ENCODE measurements at regions of chr3 and their contacts with region 1.

Region 1: GRCh38 chr3:124700880-124701684 is 29.2 kb upstream of the UMPS start:
- DNase-seq: no peak
- ATAC-seq: no peak
- H3K4me3 ChIP-seq: no peak overlapping the region
- H3K4me3 Mint-ChIP-seq: no peak overlapping the region
- H3K27ac ChIP-seq: no peak overlapping the region
- H3K27ac Mint-ChIP-seq: no peak overlapping the region
- H3K4me1 ChIP-seq: no peaks in the 10 kb centered on the region
- H3K4me1 Mint-ChIP-seq: no peaks in the 10 kb centered on the region
- H3K27me3 ChIP-seq: peaks cover 0 to 16% of the 10 kb centered on the region in 2 experiments
- H3K27me3 Mint-ChIP-seq: peaks cover 17 to 23% of the 10 kb centered on the region in 2 donors

Region 2: GRCh38 chr3:124492811-124493210 is 208.3 kb before region 1 on chr3:
- CTCF ChIA-PET with region 1: no interaction called
- POLR2A ChIA-PET with region 1: no interaction called
- DNase-seq: no peak
- ATAC-seq: no peak
- H3K4me3 ChIP-seq: no peak overlapping the region
- H3K4me3 Mint-ChIP-seq: no peak overlapping the region
- H3K27ac ChIP-seq: no peak overlapping the region
- H3K27ac Mint-ChIP-seq: no peak overlapping the region
- H3K4me1 ChIP-seq: peaks cover 0 to 4% of the 10 kb centered on the region in 2 experiments
- H3K4me1 Mint-ChIP-seq: peaks cover 0 to 11% (median 8%) of the 10 kb centered on the region in 3 donors
- H3K27me3 ChIP-seq: peaks cover 0 to 8% of the 10 kb centered on the region in 2 experiments
- H3K27me3 Mint-ChIP-seq: peaks cover 6 to 18% of the 10 kb centered on the region in 2 donors

Region 3: DNA sequence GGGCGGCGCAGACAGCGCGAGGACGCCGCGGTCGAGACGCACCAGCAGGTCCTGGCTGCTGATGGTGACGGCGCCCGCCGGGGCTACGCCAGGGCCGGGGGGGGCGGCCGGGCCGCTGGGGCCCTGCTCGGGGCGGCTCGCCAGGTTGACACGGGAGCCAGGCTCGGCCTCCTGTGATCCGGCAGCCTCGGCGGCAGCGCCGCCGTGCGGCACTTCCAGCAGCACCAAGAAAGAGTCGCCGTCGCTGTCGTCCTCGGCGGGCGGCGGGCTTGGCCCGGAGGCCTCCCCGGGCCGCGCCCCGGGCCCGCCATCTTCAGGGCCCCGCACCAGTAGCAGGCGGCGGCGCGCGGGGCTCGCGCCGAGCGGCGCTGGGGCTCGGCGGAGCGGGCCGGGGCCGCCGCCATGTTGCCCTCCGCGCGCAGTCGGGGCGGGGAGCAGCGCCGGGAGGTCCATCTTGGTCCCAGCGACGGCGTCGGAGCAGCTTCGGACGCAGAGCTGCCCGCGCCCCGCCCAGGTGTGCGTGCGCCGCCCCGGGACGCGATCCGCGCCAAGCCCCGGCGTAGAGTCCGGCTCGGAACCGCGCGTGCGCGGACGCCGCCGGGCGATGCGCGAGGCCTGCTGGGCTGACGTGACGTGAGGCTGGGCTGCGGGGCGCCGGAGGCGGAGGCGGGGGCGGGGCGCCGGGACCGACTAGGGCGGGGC is 1774.5 kb after region 1 on chr3 and contains the start of gene ZXDC:
- CTCF ChIA-PET with region 1: interaction called in 1 of 2 experiments, 10 read pairs
- POLR2A ChIA-PET with region 1: no interaction called
- DNase-seq: peak; percentile 78 to 96 (median 88)
- ATAC-seq: peak; percentile 83 to 88 (median 87)
- H3K4me3 ChIP-seq: peak within 1 kb of the TSS; percentile 73 to 89
- H3K4me3 Mint-ChIP-seq: peak within 1 kb of the TSS; percentile 71 to 91 (median 87)
- H3K27ac ChIP-seq: peak within 1 kb of the TSS; percentile 81
- H3K27ac Mint-ChIP-seq: peak within 1 kb of the TSS; percentile 74 to 85
- H3K4me1 ChIP-seq: peaks cover 20 to 41% of the 10 kb centered on the region in 2 experiments
- H3K4me1 Mint-ChIP-seq: peaks cover 40 to 49% (median 45%) of the 10 kb centered on the region in 3 donors
- H3K27me3 ChIP-seq: no peaks in the 10 kb centered on the region
- H3K27me3 Mint-ChIP-seq: no peaks in the 10 kb centered on the region
- total RNA-seq, gene ZXDC: 57.6 to 68.7 (median 61.8) TPM